ENCODE measurements at regions of chr16 and their contacts with region 1.

Region 1: DNA sequence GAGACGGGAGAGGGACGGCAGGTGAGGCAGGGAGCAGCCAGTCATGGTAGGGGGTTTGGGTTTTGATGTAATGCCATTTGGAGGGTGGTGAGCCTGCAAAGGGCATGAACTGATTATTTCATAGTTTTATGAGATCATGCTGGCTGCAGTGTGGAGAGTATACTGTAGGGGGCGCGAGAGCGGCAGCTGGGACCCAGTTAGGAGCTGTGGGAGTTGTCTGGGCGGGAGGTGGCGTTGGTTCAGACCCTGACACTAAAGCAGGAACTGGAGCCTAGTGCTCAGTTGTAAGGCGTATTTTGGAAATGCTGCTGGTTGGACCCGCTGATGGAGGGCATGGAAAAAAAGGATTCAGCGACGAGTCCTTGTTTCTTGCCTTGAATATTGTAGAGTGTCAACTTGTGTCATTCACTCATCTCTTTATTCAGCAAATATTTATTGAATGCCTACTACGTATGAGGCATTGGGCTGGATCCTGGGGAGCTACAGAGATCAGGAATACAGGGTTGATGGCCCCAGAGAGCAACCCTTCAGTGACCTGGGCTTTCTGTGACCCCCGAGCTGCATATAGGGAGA is 23.7 kb upstream of the KDM8 start:
- DNase-seq: peak; percentile 56 to 86
- H3K4me3 ChIP-seq: no peak overlapping the region
- H3K4me1 ChIP-seq: no peaks in the 10 kb centered on the region
- H3K27me3 ChIP-seq: no peaks in the 10 kb centered on the region

Region 2: DNA sequence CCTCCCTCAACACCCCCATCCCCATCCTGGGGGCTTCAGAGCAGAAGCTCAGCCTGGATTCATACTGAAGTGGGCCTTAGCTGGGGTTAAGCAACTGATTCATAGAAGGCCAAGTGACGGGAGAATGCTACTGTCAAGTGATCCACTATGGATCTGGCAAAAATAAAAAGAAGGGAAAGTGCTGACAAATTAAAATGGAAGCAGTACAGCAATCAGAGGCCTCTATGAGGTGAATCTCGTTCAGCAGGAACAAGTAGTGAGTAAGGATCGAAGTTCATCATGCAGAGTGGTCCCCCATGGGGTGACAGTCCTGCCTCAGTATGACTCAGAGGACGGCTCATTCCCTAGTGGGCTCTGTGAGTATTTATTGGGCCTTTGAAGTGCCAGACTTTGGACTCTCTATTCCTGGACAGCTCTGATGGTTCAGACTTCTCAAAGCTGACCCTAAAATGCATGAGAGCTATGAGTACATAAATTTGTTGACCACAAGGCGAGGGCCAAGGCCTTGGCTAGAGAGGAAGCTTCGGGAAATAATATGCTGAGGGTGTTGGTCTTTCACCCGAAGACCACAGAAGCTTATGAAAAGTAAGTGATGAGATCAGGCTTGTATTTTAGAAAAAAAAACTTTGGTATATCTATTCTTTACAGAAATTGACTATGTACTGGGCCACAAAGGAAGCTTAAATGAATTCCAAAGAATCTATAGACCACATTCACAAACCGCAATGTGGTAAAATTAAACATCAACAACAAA is 94.3 kb after region 1 on chr16:
- in situ Hi-C with region 1: no loop called
- DNase-seq: no peak
- H3K4me3 ChIP-seq: no peak overlapping the region
- H3K4me1 ChIP-seq: no peaks in the 10 kb centered on the region; the same call in 1 of the 2 replicates
- H3K27me3 ChIP-seq: no peaks in the 10 kb centered on the region

Region 3: GRCh38 chr16:27374804-27375425 is 195.3 kb after region 1 on chr16:
- in situ Hi-C with region 1: loop called (anchors 10 kb)
- DNase-seq: peak; percentile 52 to 86
- H3K4me3 ChIP-seq: no peak overlapping the region
- H3K4me1 ChIP-seq: no peaks in the 10 kb centered on the region
- H3K27me3 ChIP-seq: no peaks in the 10 kb centered on the region

Measured in HAP-1 (cell line).